ENCODE measurements at regions of chr18 and their contacts with region 1.

Region 1: DNA sequence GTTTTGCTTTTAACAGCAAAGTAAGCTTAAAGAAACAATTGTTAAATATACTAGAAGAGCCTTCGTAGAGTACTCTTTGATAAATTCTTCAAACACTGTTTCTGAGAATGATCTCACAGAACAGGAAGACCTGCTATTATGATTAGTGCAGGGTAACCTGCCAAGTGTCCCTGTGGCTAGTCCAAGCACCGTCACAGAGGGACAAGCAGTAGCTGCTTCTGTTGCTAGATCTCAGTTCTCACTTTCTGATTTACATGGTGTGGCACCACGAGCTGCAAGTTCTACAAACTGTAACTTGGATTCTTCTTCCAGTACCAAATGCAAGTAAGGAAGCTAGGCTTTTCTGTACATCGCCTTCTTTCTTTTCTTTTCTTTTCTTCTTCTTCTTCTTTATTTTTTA is 121.5 kb downstream of the PIEZO2 start:
- DNase-seq: no peak
- ATAC-seq: no peak
- H3K4me3 ChIP-seq: no peak overlapping the region
- H3K27ac ChIP-seq: no peak overlapping the region
- H3K4me1 ChIP-seq: no peaks in the 10 kb centered on the region
- CTCF ChIP-seq: no peak
- EP300 ChIP-seq: no peak
- POLR2A ChIP-seq: no peak
- RAD21 ChIP-seq: no peak

Region 2: DNA sequence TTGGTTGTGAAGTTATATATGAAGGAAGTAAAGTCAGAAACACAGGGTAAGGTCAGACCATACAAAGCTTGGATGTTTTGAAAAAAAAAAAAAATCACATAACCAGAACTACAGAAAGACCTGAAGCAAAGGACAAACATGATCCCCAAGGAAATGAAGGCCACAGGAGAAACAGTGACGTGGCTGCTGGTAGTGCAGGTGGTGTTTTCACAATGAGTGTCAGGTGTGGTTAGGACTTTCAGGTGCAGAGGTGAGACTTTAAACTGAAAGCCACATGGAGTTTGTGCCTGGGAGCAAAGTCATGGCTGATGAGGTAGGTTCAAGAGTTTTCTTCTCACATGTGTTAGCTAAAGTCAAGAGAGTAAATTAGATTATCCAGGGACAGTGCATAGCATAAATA is 149.2 kb before region 1 on chr18:
- CTCF ChIA-PET with region 1: no interaction called
- POLR2A ChIA-PET with region 1: no interaction called
- DNase-seq: no peak
- ATAC-seq: no peak
- H3K4me3 ChIP-seq: no peak overlapping the region
- H3K27ac ChIP-seq: no peak overlapping the region
- H3K4me1 ChIP-seq: no peaks in the 10 kb centered on the region
- CTCF ChIP-seq: no peak
- EP300 ChIP-seq: no peak
- POLR2A ChIP-seq: no peak
- RAD21 ChIP-seq: no peak

Region 3: DNA sequence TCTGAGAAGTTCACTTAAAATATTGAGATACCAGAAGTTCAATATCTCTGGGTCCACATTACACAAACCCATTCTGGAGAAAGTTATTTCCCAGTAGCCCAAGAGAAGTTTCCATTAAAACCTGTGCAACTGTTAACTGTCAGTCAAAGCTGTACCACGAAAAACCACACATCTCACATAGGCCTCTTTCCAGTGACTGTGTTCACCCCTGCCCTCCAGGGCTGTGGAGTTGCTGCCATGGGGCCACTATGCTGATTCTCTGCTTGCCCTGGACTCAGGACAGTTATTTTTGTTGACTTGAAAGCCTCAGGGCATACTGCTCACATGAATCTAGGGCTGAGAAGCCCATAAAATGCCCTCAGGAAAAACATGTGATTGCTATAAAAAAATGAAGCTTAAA is 32.3 kb before region 1 on chr18:
- CTCF ChIA-PET with region 1: no interaction called
- POLR2A ChIA-PET with region 1: no interaction called
- DNase-seq: no peak
- ATAC-seq: no peak
- H3K4me3 ChIP-seq: no peak overlapping the region
- H3K27ac ChIP-seq: no peak overlapping the region
- H3K4me1 ChIP-seq: no peaks in the 10 kb centered on the region
- CTCF ChIP-seq: no peak
- EP300 ChIP-seq: no peak
- POLR2A ChIP-seq: no peak
- RAD21 ChIP-seq: no peak

Region 4: DNA sequence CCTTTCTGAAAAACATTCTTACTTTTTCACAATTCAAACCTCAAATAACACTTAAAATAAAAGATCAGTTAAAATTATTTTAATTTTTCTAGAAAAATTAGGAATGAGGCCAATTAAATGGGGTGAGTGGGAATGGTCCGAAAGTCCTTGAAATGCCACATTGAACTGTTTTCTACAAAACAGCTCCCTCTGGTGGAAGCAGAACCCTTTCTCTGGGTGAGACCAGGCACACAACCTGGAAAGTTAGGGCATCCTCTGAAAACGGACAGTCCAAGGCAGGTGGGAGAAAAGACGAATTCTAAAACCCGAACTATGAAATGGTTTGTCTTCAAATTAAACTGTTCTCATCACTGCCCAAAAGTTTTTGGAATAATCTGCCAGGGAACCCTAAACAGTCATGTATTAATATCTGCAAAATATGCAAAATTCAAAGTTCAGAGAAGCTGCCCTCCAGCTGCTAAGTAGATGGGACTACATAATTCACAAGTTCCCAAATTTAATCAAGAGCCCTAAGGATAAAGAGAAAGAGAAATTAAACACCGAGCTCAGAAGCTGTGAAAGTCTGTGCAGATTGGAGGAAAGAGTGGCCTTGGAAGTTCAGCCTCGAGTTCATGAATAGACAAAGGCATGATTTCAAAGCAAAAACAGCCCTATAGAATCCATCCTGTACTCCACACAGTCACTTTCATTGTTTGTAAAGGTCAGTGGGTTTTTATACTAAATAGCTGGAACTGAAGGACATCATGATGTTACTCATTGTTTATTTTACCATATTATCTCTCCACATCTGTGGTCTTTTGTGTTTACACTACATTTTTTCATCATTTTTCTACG is 13.2 kb after region 1 on chr18:
- CTCF ChIA-PET with region 1: interaction called, 13 read pairs
- POLR2A ChIA-PET with region 1: no interaction called
- DNase-seq: peak; percentile 13 to 26
- ATAC-seq: peak in 1 of 2 experiments; percentile 68; a peak in 3 of 6 replicates
- H3K4me3 ChIP-seq: no peak overlapping the region
- H3K27ac ChIP-seq: no peak overlapping the region
- H3K4me1 ChIP-seq: peaks cover 6% of the 10 kb centered on the region; the same call in 1 of the 3 replicates
- CTCF ChIP-seq: peak; percentile 62
- EP300 ChIP-seq: no peak
- POLR2A ChIP-seq: no peak
- RAD21 ChIP-seq: peak; percentile 47 to 64